Activated naive CD8-positive, alpha-beta T cell treated with anti-CD3 and anti-CD28 coated beads, Interleukin-2, amount 10 ng/mL, durations not matched to agents 7 days and 5 days (primary cell): ENCODE measurements at regions of chr12 and their contacts with region 1.

Region 1: DNA sequence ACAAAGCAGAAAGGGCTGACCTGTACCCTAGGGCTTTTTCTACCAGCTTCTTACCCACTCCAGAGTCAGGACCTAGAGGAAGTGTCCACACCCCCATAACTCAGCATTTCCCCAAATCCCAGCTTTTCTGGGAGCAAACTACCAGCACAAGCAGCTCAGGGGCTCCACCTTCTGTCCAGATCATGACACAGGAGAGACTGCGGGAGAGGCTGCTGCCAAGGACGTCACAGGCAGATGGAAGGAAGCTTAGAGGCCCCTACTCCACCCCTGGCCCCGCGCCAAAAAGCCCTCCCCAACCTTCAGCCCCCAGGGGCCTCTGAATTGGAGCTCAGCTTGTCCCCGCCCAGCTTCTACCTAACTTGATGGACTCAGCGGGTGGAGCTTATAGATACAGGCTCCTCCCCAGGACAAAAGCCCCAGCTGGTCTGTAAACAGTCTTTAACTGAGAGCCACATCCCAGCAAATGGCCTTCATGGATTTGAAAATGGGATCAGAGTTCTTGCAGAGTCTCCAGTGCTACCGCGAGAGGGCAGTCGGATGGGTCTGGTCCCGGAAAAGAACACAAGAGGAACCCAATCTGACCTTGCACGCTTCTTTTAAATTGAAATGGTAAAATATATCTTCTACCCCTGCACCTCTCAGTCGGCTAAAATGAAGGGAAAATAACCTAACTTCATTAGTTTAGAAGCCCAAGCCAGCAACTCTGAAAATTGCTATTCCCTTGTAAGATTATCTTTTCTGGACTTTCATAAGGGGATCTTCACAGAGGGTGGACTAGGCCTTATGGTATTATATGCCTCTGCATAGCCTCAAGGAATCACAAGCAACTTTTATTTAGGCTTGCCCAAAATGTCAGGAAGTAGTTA is 6.8 kb upstream of the BAZ2A start:
- DNase-seq: peak; percentile 92
- ATAC-seq: peak; percentile 65
- H3K4me3 Mint-ChIP-seq: peak overlapping the region; percentile 97
- H3K27ac Mint-ChIP-seq: peak overlapping the region; percentile 95
- H3K4me1 Mint-ChIP-seq: peaks cover 53% of the 10 kb centered on the region
- H3K27me3 Mint-ChIP-seq: no peaks in the 10 kb centered on the region

Region 2: DNA sequence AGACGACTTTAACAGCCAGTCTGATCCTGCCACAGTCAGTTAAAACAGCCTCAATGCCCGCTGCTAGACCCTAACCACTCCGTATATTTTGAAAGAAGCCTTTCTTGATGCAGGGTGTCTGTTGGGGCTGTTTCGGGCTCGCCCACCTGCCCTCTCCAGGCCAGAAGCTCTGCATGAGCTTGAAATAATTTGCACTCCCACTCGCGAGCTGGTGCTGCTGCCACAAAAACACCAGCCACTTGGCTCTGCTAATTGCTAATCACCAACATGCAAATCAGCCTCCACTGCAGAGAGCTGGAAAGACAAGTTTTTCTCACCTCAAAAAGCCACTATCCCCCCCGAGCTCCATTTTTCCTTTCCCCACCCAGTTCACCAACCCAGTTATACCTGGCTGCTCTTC is 22.3 kb before region 1 on chr12:
- POLR2A ChIA-PET with region 1: interaction called, 10 read pairs
- DNase-seq: no peak
- ATAC-seq: no peak
- H3K4me3 Mint-ChIP-seq: no peak overlapping the region
- H3K27ac Mint-ChIP-seq: no peak overlapping the region
- H3K4me1 Mint-ChIP-seq: peaks cover 7% of the 10 kb centered on the region
- H3K27me3 Mint-ChIP-seq: no peaks in the 10 kb centered on the region

Region 3: GRCh38 chr12:56622535-56622934 is 14.4 kb before region 1 on chr12:
- POLR2A ChIA-PET with region 1: interaction called, 11 read pairs
- DNase-seq: no peak
- ATAC-seq: no peak
- H3K4me3 Mint-ChIP-seq: no peak overlapping the region
- H3K27ac Mint-ChIP-seq: peak overlapping the region; percentile 30
- H3K4me1 Mint-ChIP-seq: peaks cover 32% of the 10 kb centered on the region
- H3K27me3 Mint-ChIP-seq: no peaks in the 10 kb centered on the region